Dendritic cell treated with granulocyte-macrophage colony-stimulating factor and Interleukin-4, amounts not matched to agents 40 ng/mL and 50 ng/mL, for 4 days (primary cell): ENCODE measurements at regions of chr18 and their contacts with region 1.

Region 1: DNA sequence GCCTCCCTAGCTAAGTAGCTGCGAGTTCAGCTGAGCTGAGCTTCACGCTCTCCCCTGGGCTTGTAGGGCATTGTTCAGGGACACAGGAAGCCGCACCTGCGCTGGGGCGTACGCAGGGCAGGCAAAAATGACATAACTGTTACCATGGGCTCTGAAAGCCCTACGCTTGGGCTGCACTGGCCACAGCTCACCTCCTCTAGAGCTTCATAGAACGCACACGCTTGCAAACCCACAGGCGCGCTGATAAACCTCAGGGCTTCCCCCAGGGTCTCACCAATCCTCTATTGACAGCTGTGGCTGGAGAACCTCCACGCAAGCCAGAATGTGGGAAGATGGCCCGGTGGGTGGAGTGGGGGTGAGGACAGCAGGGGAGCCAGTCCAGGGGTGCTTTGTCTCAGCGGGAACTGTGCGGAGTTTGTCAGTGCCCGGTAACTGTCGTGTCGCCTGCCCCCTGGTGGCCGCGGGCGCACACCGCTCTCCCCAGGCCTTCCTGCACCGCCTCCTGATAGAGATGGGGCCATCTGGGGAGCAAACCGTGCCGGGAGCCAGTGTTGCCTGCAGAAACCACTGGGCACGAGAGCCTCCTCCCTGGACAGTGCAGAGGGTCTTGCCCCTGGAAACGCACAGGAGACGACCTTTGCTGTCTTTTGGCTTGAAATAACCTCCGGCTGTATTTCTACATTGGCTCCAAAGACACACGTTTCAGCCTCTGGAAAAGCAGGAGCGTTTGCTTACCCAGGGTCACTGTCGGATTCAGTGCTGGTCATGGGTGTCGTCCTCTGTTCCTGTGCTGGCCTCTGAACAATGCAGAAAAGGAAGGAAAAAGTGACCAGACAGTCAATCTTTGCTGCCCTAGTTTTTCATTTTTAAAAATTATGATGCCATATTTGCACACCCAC is 17.0 kb upstream of the CIDEA start:
- H3K4me3 Mint-ChIP-seq: no peak overlapping the region
- H3K27ac Mint-ChIP-seq: no peak overlapping the region
- H3K4me1 Mint-ChIP-seq: peaks cover 19% of the 10 kb centered on the region
- H3K27me3 Mint-ChIP-seq: peaks cover 31% of the 10 kb centered on the region

Region 2: DNA sequence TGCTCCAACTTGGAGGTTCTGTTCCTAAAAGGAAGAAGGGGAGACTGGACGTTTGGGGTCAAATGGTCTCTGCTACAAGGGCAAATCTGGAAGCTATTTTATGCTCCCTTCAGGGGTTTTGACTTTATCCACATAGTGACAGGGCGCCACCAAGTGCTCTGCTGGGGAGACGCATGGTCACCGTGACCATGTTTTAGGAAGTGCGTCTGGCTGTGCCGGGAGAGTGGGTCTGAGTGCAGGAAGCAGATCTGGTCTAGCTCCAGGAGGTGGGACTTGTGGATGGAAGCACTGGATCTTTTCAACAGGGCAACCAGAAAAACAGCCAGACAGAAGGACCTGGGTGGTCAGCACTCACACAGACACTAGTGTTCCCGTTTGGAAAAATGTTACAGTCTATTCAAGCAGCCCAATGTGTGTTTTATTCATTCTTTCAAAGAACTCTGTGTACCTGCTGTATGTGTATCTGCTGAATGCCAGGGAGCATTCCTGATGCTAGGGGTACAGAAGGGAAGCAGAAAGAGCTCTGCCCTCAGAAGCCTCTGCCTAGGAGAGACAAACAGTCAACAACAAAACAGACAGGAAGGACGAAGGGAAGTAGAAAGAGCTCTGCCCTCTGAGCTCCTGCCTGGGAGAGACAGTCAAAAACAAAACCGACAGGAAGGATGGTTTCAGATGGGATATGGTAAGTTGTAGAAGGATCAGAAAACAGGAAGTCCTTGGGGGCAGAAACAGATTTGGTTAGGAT is 241.6 kb before region 1 on chr18:
- intact Hi-C with region 1: no loop called
- H3K4me3 Mint-ChIP-seq: no peak overlapping the region
- H3K27ac Mint-ChIP-seq: peak overlapping the region; percentile 61
- H3K4me1 Mint-ChIP-seq: peaks cover 50% of the 10 kb centered on the region
- H3K27me3 Mint-ChIP-seq: no peaks in the 10 kb centered on the region

Region 3: DNA sequence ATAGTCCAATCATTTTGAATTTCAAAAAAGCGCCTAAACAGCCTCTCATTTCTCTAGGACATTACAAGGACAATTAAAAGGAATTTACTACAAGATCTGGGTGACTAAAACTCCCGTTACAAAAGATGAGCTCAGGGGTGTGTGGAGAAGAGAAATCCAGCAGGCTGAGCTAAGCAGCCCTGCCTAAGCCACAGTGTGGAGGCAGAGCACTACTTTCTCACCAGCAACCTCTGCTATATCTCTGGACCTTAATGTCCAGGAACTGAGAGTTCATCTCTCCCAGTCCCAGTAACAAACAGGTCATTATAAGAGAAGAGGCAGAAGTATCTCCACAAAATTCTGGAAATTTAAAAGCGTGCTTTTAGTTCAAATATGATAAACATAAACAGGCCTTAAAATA is 162.4 kb before region 1 on chr18:
- intact Hi-C with region 1: loop called (anchors 5 kb)
- H3K4me3 Mint-ChIP-seq: no peak overlapping the region
- H3K27ac Mint-ChIP-seq: no peak overlapping the region
- H3K4me1 Mint-ChIP-seq: peaks cover 4% of the 10 kb centered on the region
- H3K27me3 Mint-ChIP-seq: peaks cover 19% of the 10 kb centered on the region

Region 4: DNA sequence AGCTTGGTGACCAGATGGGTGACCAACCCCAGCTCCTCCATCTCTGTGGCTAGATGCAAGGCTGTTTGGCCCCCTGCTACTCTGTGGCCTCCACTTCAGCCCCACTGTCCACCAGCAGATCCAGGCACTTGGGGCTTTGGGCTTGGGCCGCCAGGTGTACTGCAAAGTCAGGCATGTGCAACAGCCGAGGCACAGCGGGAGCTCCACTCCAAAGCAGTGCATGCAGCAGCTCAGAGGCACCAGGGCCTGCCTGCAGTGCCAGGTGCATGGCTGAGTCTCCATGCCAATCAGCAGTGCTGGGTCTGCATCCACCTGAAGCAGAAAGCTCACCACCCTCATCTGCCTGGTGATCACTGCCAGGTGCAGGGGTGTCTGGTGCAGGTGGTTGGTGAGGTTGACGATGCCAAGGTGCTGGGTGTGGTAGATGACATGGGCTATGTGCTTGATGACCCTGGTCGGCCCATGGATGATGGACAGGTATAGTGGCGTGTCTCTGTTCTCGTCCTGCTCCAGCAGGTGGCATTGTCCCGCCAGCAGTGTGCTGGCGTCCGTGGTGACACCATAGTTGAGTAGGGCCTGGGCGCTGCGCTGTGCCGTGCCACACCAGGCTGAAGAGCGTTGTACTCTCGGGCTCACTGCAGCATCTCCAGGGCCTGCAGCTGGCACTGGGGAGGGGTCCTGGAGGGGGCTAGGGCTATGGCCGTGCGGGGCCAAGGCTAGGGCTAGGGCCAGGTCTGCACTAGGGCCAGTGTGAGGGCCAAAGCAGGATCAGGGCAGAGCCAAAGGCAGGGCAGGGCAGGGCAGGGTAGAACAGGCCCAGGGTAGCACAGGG is 144.6 kb before region 1 on chr18:
- intact Hi-C with region 1: loop called (anchors 5 kb)
- H3K4me3 Mint-ChIP-seq: no peak overlapping the region
- H3K27ac Mint-ChIP-seq: no peak overlapping the region
- H3K4me1 Mint-ChIP-seq: no peaks in the 10 kb centered on the region
- H3K27me3 Mint-ChIP-seq: peaks cover 4% of the 10 kb centered on the region